ENCODE measurements at regions of chr12 and their contacts with region 1.

Region 1: GRCh38 chr12:50415899-50416479 is 15.3 kb downstream of the LARP4 start:
- DNase-seq: no peak
- ATAC-seq: no peak
- H3K4me3 ChIP-seq: no peak overlapping the region
- H3K4me3 Mint-ChIP-seq: no peak overlapping the region
- H3K27ac ChIP-seq: no peak overlapping the region
- H3K27ac Mint-ChIP-seq: no peak overlapping the region
- H3K4me1 ChIP-seq: peaks cover 4% of the 10 kb centered on the region
- H3K4me1 Mint-ChIP-seq: peaks cover 36% of the 10 kb centered on the region
- H3K27me3 ChIP-seq: no peaks in the 10 kb centered on the region
- H3K27me3 Mint-ChIP-seq: no peaks in the 10 kb centered on the region
- CTCF ChIP-seq: no peak

Region 2: GRCh38 chr12:50400598-50401364 is 15.2 kb before region 1 on chr12 and contains the start of gene LARP4:
- CTCF ChIA-PET with region 1: no interaction called
- POLR2A ChIA-PET with region 1: no interaction called
- intact Hi-C with region 1: loop called in 1 of 2 experiments (anchors 2 kb)
- DNase-seq: peak; percentile 79 to 94 (median 85)
- ATAC-seq: peak; percentile 94
- H3K4me3 ChIP-seq: peak within 1 kb of the TSS; percentile 91
- H3K4me3 Mint-ChIP-seq: peak within 1 kb of the TSS; percentile 94
- H3K27ac ChIP-seq: peak within 1 kb of the TSS; percentile 65 to 70
- H3K27ac Mint-ChIP-seq: peak within 1 kb of the TSS; percentile 80
- H3K4me1 ChIP-seq: peaks cover 15% of the 10 kb centered on the region
- H3K4me1 Mint-ChIP-seq: peaks cover 30% of the 10 kb centered on the region
- H3K27me3 ChIP-seq: no peaks in the 10 kb centered on the region
- H3K27me3 Mint-ChIP-seq: peaks cover 11% of the 10 kb centered on the region
- CTCF ChIP-seq: peak; percentile 10
- total RNA-seq, gene LARP4: 17.6 to 18.1 TPM

Region 3: DNA sequence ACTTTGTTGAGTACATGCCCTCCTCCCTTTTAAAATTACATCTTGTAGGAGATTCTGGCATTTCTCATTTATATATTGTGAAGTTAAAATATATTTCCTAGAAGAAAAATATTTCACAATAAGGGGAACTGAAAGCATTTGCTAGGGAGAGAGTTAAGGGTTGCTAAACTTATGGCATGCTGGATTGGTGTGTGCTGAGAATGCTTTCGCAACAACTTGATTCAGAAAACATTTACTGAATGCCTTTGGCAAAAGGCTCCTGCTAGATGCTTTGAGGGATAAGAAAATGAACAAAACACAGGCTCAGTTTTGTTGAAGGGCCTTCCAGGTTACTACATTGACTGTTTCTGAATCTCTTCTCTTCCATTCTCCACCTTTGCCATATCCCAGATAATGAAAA is 156.3 kb after region 1 on chr12:
- CTCF ChIA-PET with region 1: no interaction called
- POLR2A ChIA-PET with region 1: no interaction called
- intact Hi-C with region 1: no loop called
- DNase-seq: peak in 3 of 14 experiments; percentile 8 to 35 (median 34)
- ATAC-seq: no peak
- H3K4me3 ChIP-seq: no peak overlapping the region
- H3K4me3 Mint-ChIP-seq: no peak overlapping the region
- H3K27ac ChIP-seq: no peak overlapping the region
- H3K27ac Mint-ChIP-seq: peak overlapping the region; percentile 8
- H3K4me1 ChIP-seq: peaks cover 7% of the 10 kb centered on the region
- H3K4me1 Mint-ChIP-seq: peaks cover 57% of the 10 kb centered on the region
- H3K27me3 ChIP-seq: no peaks in the 10 kb centered on the region
- H3K27me3 Mint-ChIP-seq: no peaks in the 10 kb centered on the region
- CTCF ChIP-seq: no peak

Measured in CD4-positive, alpha-beta T cell (primary cell).